Naive thymus-derived CD4-positive, alpha-beta T cell (primary cell): ENCODE measurements at regions of chr4 and their contacts with region 1.

Region 1: DNA sequence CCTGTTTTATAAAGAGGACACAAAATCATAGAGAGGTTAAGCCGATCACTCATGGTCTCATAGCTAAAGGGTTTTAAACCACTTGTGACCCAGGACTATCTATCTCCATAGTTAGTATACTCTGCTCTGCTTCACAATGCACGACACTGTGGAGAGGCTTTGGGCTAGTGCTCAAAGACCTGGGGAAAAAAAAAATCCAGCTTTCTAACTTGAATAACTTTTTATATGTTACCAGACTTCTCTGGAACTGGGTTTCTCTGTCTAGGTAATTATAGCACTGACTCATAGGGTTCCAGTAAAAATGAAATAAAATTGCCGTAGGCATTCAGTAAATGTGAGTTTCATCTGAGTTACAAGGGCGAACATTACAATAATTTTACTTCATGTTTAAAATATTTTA is 273.7 kb upstream of the TECRL start:
- DNase-seq: no peak
- ATAC-seq: no peak
- H3K4me3 ChIP-seq: no peak overlapping the region
- H3K4me3 Mint-ChIP-seq: no peak overlapping the region
- H3K27ac ChIP-seq: no peak overlapping the region
- H3K27ac Mint-ChIP-seq: no peak overlapping the region
- H3K4me1 ChIP-seq: no peaks in the 10 kb centered on the region
- H3K4me1 Mint-ChIP-seq: no peaks in the 10 kb centered on the region
- H3K27me3 ChIP-seq: no peaks in the 10 kb centered on the region
- H3K27me3 Mint-ChIP-seq: no peaks in the 10 kb centered on the region

Region 2: GRCh38 chr4:64756016-64756415 is 73.1 kb after region 1 on chr4:
- CTCF ChIA-PET with region 1: no interaction called
- POLR2A ChIA-PET with region 1: no interaction called
- intact Hi-C with region 1: loop called in 1 of 2 experiments (anchors 2 kb)
- DNase-seq: no peak
- ATAC-seq: no peak
- H3K4me3 ChIP-seq: no peak overlapping the region
- H3K4me3 Mint-ChIP-seq: no peak overlapping the region
- H3K27ac ChIP-seq: no peak overlapping the region
- H3K27ac Mint-ChIP-seq: no peak overlapping the region
- H3K4me1 ChIP-seq: no peaks in the 10 kb centered on the region
- H3K4me1 Mint-ChIP-seq: no peaks in the 10 kb centered on the region
- H3K27me3 ChIP-seq: no peaks in the 10 kb centered on the region
- H3K27me3 Mint-ChIP-seq: no peaks in the 10 kb centered on the region